B cell (primary cell): ENCODE measurements at regions of chr1 and their contacts with region 1.

Region 1: DNA sequence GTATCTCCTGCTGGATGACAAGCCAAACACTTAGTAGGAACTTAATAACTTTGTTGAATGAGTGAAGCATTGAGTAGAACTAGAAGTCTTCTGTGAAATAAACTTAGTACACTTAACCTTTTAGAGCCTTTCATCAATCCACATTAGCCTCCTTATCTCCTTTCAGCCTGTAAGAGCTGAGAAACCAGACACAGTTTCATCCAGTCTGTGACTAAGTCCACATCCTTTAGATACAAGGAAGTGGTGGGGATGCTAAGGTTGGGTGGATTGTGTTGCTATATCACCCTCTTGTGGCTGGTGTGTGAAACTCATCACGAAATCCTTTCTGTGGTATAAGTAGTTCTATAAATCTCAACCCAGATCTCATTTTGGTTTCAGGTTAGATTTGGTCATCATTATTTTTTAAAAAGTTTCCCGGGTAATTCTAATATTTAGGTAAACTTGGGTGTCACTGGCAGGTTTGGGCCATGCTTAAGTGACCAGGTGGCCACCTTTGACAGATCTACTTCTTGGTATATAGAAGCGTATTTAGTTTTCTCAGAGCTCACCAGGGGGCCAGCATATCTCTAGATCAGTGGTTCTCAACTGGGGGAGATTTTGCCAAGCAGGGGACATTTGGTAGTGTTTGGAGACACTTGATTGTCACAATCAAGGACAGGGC is 27.8 kb upstream of the CD84 start:
- DNase-seq: peak; percentile 88
- ATAC-seq: peak; percentile 94
- H3K4me3 ChIP-seq: no peak overlapping the region
- H3K4me3 Mint-ChIP-seq: peak overlapping the region; percentile 54
- H3K27ac ChIP-seq: peak overlapping the region; percentile 13 to 68
- H3K27ac Mint-ChIP-seq: peak overlapping the region; percentile 89
- H3K4me1 ChIP-seq: peaks cover 20 to 28% of the 10 kb centered on the region in 2 donors
- H3K4me1 Mint-ChIP-seq: peaks cover 32% of the 10 kb centered on the region
- H3K27me3 ChIP-seq: no peaks in the 10 kb centered on the region
- H3K27me3 Mint-ChIP-seq: no peaks in the 10 kb centered on the region
- CTCF ChIP-seq: peak; percentile 82

Region 2: GRCh38 chr1:160261893-160262794 is 345.0 kb before region 1 on chr1 and contains the start of gene DCAF8:
- CTCF ChIA-PET with region 1: no interaction called
- POLR2A ChIA-PET with region 1: no interaction called
- intact Hi-C with region 1: no loop called
- DNase-seq: peak; percentile 98
- ATAC-seq: peak; percentile 92
- H3K4me3 ChIP-seq: peak within 1 kb of the TSS; percentile 96 to 100 (median 99)
- H3K4me3 Mint-ChIP-seq: peak within 1 kb of the TSS; percentile 100
- H3K27ac ChIP-seq: peak within 1 kb of the TSS; percentile 96 to 97
- H3K27ac Mint-ChIP-seq: peak within 1 kb of the TSS; percentile 92
- H3K4me1 ChIP-seq: peaks cover 20 to 22% of the 10 kb centered on the region in 2 donors
- H3K4me1 Mint-ChIP-seq: peaks cover 41% of the 10 kb centered on the region
- H3K27me3 ChIP-seq: no peaks in the 10 kb centered on the region
- H3K27me3 Mint-ChIP-seq: no peaks in the 10 kb centered on the region
- CTCF ChIP-seq: no peak
- total RNA-seq, gene DCAF8: 247 and 266 TPM in 2 replicates

Region 3: GRCh38 chr1:160354388-160354985 is 252.7 kb before region 1 on chr1:
- CTCF ChIA-PET with region 1: interaction called, 9 read pairs
- POLR2A ChIA-PET with region 1: no interaction called
- intact Hi-C with region 1: loop called (anchors 1 kb)
- DNase-seq: peak; percentile 36
- ATAC-seq: peak; percentile 43
- H3K4me3 ChIP-seq: no peak overlapping the region
- H3K4me3 Mint-ChIP-seq: no peak overlapping the region
- H3K27ac ChIP-seq: no peak overlapping the region
- H3K27ac Mint-ChIP-seq: no peak overlapping the region
- H3K4me1 ChIP-seq: no peaks in the 10 kb centered on the region
- H3K4me1 Mint-ChIP-seq: no peaks in the 10 kb centered on the region
- H3K27me3 ChIP-seq: no peaks in the 10 kb centered on the region
- H3K27me3 Mint-ChIP-seq: no peaks in the 10 kb centered on the region
- CTCF ChIP-seq: peak; percentile 48

Region 4: GRCh38 chr1:160437432-160438316 is 169.5 kb before region 1 on chr1:
- CTCF ChIA-PET with region 1: interaction called, 233 read pairs
- POLR2A ChIA-PET with region 1: interaction called, 3 read pairs
- intact Hi-C with region 1: no loop called
- DNase-seq: peak; percentile 73
- ATAC-seq: peak; percentile 86
- H3K4me3 ChIP-seq: peak overlapping the region; percentile 5 to 56 (median 36)
- H3K4me3 Mint-ChIP-seq: peak overlapping the region; percentile 89
- H3K27ac ChIP-seq: peak overlapping the region; percentile 72 to 92
- H3K27ac Mint-ChIP-seq: peak overlapping the region; percentile 98
- H3K4me1 ChIP-seq: peaks cover 38 to 40% of the 10 kb centered on the region in 2 donors
- H3K4me1 Mint-ChIP-seq: peaks cover 66% of the 10 kb centered on the region
- H3K27me3 ChIP-seq: no peaks in the 10 kb centered on the region
- H3K27me3 Mint-ChIP-seq: no peaks in the 10 kb centered on the region
- CTCF ChIP-seq: no peak

Region 5: GRCh38 chr1:160489513-160490261 is 117.5 kb before region 1 on chr1:
- CTCF ChIA-PET with region 1: interaction called, 30 read pairs
- POLR2A ChIA-PET with region 1: no interaction called
- intact Hi-C with region 1: loop called (anchors 5 kb)
- DNase-seq: peak; percentile 78
- ATAC-seq: peak; percentile 21
- H3K4me3 ChIP-seq: no peak overlapping the region
- H3K4me3 Mint-ChIP-seq: peak overlapping the region; percentile 81
- H3K27ac ChIP-seq: peak overlapping the region; percentile 85 to 93
- H3K27ac Mint-ChIP-seq: no peak overlapping the region
- H3K4me1 ChIP-seq: peaks cover 82 to 84% of the 10 kb centered on the region in 2 donors
- H3K4me1 Mint-ChIP-seq: peaks cover 4% of the 10 kb centered on the region
- H3K27me3 ChIP-seq: no peaks in the 10 kb centered on the region
- H3K27me3 Mint-ChIP-seq: no peaks in the 10 kb centered on the region
- CTCF ChIP-seq: no peak

Region 6: GRCh38 chr1:160567858-160568682 is 39.1 kb before region 1 on chr1:
- CTCF ChIA-PET with region 1: interaction called, 10 read pairs
- POLR2A ChIA-PET with region 1: no interaction called
- intact Hi-C with region 1: no loop called
- DNase-seq: no peak
- ATAC-seq: peak; percentile 47
- H3K4me3 ChIP-seq: no peak overlapping the region
- H3K4me3 Mint-ChIP-seq: peak overlapping the region; percentile 27
- H3K27ac ChIP-seq: peak overlapping the region in 1 of 2 donors; percentile 54
- H3K27ac Mint-ChIP-seq: peak overlapping the region; percentile 77
- H3K4me1 ChIP-seq: peaks cover 16 to 33% of the 10 kb centered on the region in 2 donors
- H3K4me1 Mint-ChIP-seq: peaks cover 68% of the 10 kb centered on the region
- H3K27me3 ChIP-seq: no peaks in the 10 kb centered on the region
- H3K27me3 Mint-ChIP-seq: no peaks in the 10 kb centered on the region
- CTCF ChIP-seq: no peak

Region 7: GRCh38 chr1:160618763-160619274 is 11.7 kb after region 1 on chr1:
- CTCF ChIA-PET with region 1: interaction called, 36 read pairs
- POLR2A ChIA-PET with region 1: no interaction called
- intact Hi-C with region 1: loop called (anchors 2 kb)
- DNase-seq: peak; percentile 58
- ATAC-seq: peak; percentile 42
- H3K4me3 ChIP-seq: no peak overlapping the region
- H3K4me3 Mint-ChIP-seq: no peak overlapping the region
- H3K27ac ChIP-seq: peak overlapping the region in 1 of 2 donors; percentile 2
- H3K27ac Mint-ChIP-seq: peak overlapping the region; percentile 8
- H3K4me1 ChIP-seq: peaks cover 35 to 43% of the 10 kb centered on the region in 2 donors
- H3K4me1 Mint-ChIP-seq: peaks cover 59% of the 10 kb centered on the region
- H3K27me3 ChIP-seq: no peaks in the 10 kb centered on the region
- H3K27me3 Mint-ChIP-seq: no peaks in the 10 kb centered on the region
- CTCF ChIP-seq: peak; percentile 79

Region 8: GRCh38 chr1:160911441-160911840 is 304.3 kb after region 1 on chr1:
- CTCF ChIA-PET with region 1: no interaction called
- POLR2A ChIA-PET with region 1: no interaction called
- intact Hi-C with region 1: no loop called
- DNase-seq: no peak
- ATAC-seq: no peak
- H3K4me3 ChIP-seq: no peak overlapping the region
- H3K4me3 Mint-ChIP-seq: no peak overlapping the region
- H3K27ac ChIP-seq: no peak overlapping the region
- H3K27ac Mint-ChIP-seq: no peak overlapping the region
- H3K4me1 ChIP-seq: no peaks in the 10 kb centered on the region
- H3K4me1 Mint-ChIP-seq: no peaks in the 10 kb centered on the region
- H3K27me3 ChIP-seq: no peaks in the 10 kb centered on the region
- H3K27me3 Mint-ChIP-seq: no peaks in the 10 kb centered on the region
- CTCF ChIP-seq: no peak